WTC11 (cell line): ENCODE measurements at regions of chr21 and their contacts with region 1.

Region 1: DNA sequence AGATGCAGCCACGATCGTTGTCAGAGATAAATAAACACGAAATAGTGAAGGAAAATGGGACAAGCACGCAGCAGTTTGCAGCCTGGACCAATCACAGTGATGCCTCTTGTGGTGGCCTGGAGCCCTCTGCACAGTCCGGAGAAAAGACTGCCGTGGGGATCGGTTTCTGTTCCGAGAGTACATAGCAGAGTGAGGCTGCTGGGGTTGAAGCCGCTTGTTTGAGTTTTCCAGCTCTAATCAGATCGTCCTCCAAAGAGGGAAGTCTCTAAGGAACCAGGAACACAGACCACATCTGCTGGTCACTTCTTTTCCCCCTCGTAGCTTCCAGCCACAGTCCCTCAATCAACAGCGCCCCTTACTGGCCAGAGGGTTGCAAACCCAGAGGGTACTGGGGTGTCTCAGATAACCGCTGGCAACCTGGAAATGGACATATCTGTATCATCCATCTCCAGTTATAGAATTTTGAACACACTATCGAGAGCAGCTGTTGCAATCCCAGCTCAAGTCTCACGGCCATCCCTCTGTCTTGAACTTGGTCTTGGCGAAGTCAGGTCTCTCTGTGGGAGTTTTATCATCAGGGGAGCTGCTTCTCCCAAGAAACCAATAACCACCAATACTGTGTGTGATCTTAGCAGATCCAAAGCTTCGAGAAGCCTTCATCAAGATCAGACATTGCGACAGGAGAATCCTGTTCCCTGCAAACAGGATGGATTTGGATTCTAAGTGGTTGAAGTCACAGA is 57.4 kb downstream of the OLIG1 start:
- DNase-seq: peak; percentile 82
- ATAC-seq: peak; percentile 94
- H3K4me3 Mint-ChIP-seq: peak overlapping the region; percentile 58
- H3K27ac Mint-ChIP-seq: no peak overlapping the region
- H3K4me1 Mint-ChIP-seq: peaks cover 42% of the 10 kb centered on the region
- H3K27me3 Mint-ChIP-seq: peaks cover 16% of the 10 kb centered on the region
- CTCF ChIP-seq: peak; percentile 65

Region 2: GRCh38 chr21:32940079-32941014 is 187.0 kb before region 1 on chr21:
- CTCF ChIA-PET with region 1: interaction called, 37 read pairs
- POLR2A ChIA-PET with region 1: no interaction called
- DNase-seq: peak; percentile 41
- ATAC-seq: peak; percentile 93
- H3K4me3 Mint-ChIP-seq: no peak overlapping the region
- H3K27ac Mint-ChIP-seq: no peak overlapping the region
- H3K4me1 Mint-ChIP-seq: peaks cover 7% of the 10 kb centered on the region
- H3K27me3 Mint-ChIP-seq: peaks cover 4% of the 10 kb centered on the region
- CTCF ChIP-seq: peak; percentile 72

Region 3: DNA sequence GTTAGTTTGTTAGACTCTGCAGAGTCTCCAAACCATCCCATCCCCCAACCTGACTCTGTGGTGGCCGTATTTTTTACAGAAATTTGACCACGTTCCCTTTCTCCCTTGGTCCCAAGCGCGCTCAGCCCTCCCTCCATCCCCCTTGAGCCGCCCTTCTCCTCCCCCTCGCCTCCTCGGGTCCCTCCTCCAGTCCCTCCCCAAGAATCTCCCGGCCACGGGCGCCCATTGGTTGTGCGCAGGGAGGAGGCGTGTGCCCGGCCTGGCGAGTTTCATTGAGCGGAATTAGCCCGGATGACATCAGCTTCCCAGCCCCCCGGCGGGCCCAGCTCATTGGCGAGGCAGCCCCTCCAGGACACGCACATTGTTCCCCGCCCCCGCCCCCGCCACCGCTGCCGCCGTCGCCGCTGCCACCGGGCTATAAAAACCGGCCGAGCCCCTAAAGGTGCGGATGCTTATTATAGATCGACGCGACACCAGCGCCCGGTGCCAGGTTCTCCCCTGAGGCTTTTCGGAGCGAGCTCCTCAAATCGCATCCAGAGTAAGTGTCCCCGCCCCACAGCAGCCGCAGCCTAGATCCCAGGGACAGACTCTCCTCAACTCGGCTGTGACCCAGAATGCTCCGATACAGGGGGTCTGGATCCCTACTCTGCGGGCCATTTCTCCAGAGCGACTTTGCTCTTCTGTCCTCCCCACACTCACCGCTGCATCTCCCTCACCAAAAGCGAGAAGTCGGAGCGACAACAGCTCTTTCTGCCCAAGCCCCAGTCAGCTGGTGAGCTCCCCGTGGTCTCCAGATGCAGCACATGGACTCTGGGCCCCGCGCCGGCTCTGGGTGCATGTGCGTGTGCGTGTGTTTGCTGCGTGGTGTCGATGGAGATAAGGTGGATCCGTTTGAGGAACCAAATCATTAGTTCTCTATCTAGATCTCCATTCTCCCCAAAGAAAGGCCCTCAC is 101.6 kb before region 1 on chr21 and contains the start of gene OLIG2:
- CTCF ChIA-PET with region 1: interaction called, 82 read pairs
- POLR2A ChIA-PET with region 1: interaction called, 5 read pairs
- DNase-seq: peak; percentile 95
- ATAC-seq: peak; percentile 87
- H3K4me3 Mint-ChIP-seq: peak within 1 kb of the TSS; percentile 73
- H3K27ac Mint-ChIP-seq: no peak within 1 kb of the TSS
- H3K4me1 Mint-ChIP-seq: peaks cover 60% of the 10 kb centered on the region
- H3K27me3 Mint-ChIP-seq: peaks cover 100% of the 10 kb centered on the region
- CTCF ChIP-seq: no peak
- total RNA-seq, gene OLIG2: 0.60 to 0.79 TPM (median 0.71 TPM) in 3 replicates

Region 4: DNA sequence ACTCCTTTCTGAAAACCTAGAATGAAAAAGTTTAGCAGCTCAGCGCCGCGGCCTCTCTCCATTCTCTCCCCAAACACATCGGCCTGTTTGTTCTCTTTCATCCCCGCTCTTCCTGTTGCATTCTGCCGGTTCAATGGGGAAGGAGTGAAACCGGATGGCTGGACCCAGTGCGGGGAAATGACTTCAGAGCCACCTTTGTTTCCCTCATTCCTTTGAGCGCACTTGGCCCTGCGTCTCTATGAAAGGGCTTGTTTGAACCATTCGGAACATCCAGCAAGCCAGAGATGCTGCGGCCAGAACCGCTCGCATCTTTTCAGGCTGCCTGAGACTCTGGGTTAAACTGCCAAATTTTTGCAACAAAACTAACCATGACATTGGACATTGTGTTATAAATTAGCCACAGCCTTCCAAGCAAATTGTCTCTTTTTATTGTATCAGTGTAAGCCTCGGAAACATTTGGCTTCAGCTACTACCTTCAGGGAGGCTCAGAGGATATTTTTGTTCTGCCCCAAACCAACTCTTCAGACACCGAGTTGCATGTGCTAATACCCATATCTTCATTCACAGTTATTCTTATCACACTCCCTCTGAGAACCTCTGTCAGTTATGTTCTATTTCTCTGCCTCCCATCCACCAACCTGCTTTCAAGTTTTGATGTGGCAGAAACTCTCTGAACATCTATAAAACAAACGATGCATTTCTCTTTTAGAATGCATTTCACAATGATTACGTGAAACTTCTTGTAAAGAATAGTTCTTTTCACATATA is 62.5 kb before region 1 on chr21:
- CTCF ChIA-PET with region 1: interaction called, 25 read pairs
- POLR2A ChIA-PET with region 1: interaction called, 3 read pairs
- DNase-seq: no peak
- ATAC-seq: peak; percentile 78
- H3K4me3 Mint-ChIP-seq: peak overlapping the region; percentile 50
- H3K27ac Mint-ChIP-seq: no peak overlapping the region
- H3K4me1 Mint-ChIP-seq: peaks cover 23% of the 10 kb centered on the region
- H3K27me3 Mint-ChIP-seq: peaks cover 81% of the 10 kb centered on the region
- CTCF ChIP-seq: no peak

Region 5: DNA sequence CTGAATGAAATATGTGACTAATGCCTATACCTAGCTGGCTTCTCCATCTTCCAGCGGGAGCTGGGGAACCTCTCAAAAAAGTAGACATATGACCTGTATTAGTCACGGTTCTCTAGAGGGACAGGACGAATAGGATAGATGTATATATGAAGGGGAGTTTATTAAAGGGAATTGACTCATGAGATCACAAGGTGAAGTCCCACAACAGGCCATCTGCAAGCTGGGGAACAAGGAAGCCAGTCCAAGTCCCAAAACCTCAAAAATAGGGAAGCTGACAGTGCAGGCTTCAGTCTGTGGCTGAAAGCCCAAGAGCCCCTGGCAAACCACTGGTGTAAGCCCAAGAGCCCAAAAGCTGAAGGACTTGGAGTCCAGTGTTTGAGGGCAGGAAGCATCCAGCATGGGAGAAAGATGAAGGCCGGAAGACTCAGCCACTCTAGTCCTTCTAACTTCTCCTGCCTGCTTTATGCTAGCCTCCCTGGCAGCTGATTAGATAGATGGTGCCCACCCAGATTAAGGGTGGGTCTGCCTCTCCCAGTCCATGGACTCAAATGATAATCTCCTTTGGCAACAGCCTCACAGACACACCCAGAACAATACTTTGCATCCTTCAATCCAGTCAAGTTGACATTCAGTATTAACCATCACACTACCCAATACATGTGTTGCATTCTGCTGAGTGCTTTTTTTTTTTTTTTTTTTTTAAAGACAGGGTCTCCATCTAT is 37.8 kb before region 1 on chr21:
- CTCF ChIA-PET with region 1: interaction called, 15 read pairs
- POLR2A ChIA-PET with region 1: no interaction called
- DNase-seq: no peak
- ATAC-seq: no peak
- H3K4me3 Mint-ChIP-seq: no peak overlapping the region
- H3K27ac Mint-ChIP-seq: no peak overlapping the region
- H3K4me1 Mint-ChIP-seq: peaks cover 19% of the 10 kb centered on the region
- H3K27me3 Mint-ChIP-seq: no peaks in the 10 kb centered on the region
- CTCF ChIP-seq: no peak

Region 6: DNA sequence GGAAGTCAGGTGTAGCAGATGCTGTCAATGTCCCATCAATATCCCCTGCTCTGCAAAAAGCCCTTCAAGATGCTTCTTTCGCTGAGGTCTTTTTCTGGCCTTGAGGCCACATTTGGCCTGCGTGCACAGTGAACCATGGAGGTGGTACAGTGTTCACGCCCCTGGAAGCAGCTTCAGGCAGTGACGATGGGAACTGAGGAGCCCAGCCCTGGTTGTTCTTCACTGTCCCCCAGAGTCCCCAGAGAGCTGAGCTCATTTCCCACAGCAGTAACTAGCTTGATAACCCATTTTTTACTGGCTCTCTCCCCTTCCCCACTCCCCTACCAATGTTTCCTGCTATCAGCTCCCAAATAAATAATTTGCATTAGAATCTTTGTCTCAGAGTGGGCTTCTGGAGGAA is 19.1 kb after region 1 on chr21:
- CTCF ChIA-PET with region 1: interaction called, 10 read pairs
- POLR2A ChIA-PET with region 1: no interaction called
- DNase-seq: no peak
- ATAC-seq: no peak
- H3K4me3 Mint-ChIP-seq: no peak overlapping the region
- H3K27ac Mint-ChIP-seq: no peak overlapping the region
- H3K4me1 Mint-ChIP-seq: peaks cover 39% of the 10 kb centered on the region
- H3K27me3 Mint-ChIP-seq: peaks cover 3% of the 10 kb centered on the region; the same call in 1 of the 2 replicates
- CTCF ChIP-seq: no peak

Region 7: DNA sequence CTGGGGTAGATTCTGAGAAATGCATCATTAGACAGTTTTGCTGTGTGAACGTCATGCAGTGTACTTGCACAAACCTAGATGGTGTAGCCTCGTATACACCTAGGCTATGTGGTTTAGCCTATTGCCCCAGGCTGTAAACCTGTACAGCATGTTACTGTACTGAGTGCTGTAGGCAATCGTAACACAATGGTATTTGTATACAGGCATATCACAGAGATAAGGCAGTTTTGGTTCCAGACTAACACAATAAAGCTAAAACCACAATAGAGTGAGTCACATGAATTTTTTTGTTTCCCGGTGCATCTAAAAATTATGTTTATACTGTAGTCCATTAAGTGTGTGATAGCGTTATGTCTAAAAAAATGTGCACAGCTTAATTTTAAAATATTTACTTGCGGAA is 145.7 kb after region 1 on chr21:
- CTCF ChIA-PET with region 1: no interaction called
- POLR2A ChIA-PET with region 1: no interaction called
- DNase-seq: no peak
- ATAC-seq: no peak
- H3K4me3 Mint-ChIP-seq: no peak overlapping the region
- H3K27ac Mint-ChIP-seq: no peak overlapping the region
- H3K4me1 Mint-ChIP-seq: peaks cover 2% of the 10 kb centered on the region
- H3K27me3 Mint-ChIP-seq: no peaks in the 10 kb centered on the region
- CTCF ChIP-seq: no peak